Activated CD4-positive, alpha-beta memory T cell treated with anti-CD3 and anti-CD28 coated beads for 36 hours (primary cell): ENCODE measurements at regions of chr19 and their contacts with region 1.

Region 1: GRCh38 chr19:7868676-7869452 is 5.3 kb downstream of the PRR36 start:
- DNase-seq: peak; percentile 86
- H3K4me3 Mint-ChIP-seq: peak overlapping the region; percentile 73
- H3K27ac Mint-ChIP-seq: no peak overlapping the region
- H3K4me1 Mint-ChIP-seq: peaks cover 42% of the 10 kb centered on the region
- H3K27me3 Mint-ChIP-seq: peaks cover 29% of the 10 kb centered on the region

Region 2: GRCh38 chr19:7618771-7619514 is 249.9 kb before region 1 on chr19:
- CTCF ChIA-PET with region 1: no interaction called
- POLR2A ChIA-PET with region 1: no interaction called
- intact Hi-C with region 1: no loop called
- DNase-seq: no peak
- H3K4me3 Mint-ChIP-seq: no peak overlapping the region
- H3K27ac Mint-ChIP-seq: no peak overlapping the region
- H3K4me1 Mint-ChIP-seq: no peaks in the 10 kb centered on the region
- H3K27me3 Mint-ChIP-seq: no peaks in the 10 kb centered on the region

Region 3: GRCh38 chr19:7829561-7830271 is 39.1 kb before region 1 on chr19 and contains the start of gene EVI5L:
- CTCF ChIA-PET with region 1: interaction called, 12 read pairs
- POLR2A ChIA-PET with region 1: no interaction called
- intact Hi-C with region 1: loop called (anchors 2 kb)
- DNase-seq: peak; percentile 99
- H3K4me3 Mint-ChIP-seq: peak within 1 kb of the TSS; percentile 81
- H3K27ac Mint-ChIP-seq: peak within 1 kb of the TSS; percentile 55
- H3K4me1 Mint-ChIP-seq: peaks cover 17% of the 10 kb centered on the region
- H3K27me3 Mint-ChIP-seq: peaks cover 3% of the 10 kb centered on the region
- total RNA-seq, gene EVI5L: 5.0 to 5.6 TPM

Region 4: DNA sequence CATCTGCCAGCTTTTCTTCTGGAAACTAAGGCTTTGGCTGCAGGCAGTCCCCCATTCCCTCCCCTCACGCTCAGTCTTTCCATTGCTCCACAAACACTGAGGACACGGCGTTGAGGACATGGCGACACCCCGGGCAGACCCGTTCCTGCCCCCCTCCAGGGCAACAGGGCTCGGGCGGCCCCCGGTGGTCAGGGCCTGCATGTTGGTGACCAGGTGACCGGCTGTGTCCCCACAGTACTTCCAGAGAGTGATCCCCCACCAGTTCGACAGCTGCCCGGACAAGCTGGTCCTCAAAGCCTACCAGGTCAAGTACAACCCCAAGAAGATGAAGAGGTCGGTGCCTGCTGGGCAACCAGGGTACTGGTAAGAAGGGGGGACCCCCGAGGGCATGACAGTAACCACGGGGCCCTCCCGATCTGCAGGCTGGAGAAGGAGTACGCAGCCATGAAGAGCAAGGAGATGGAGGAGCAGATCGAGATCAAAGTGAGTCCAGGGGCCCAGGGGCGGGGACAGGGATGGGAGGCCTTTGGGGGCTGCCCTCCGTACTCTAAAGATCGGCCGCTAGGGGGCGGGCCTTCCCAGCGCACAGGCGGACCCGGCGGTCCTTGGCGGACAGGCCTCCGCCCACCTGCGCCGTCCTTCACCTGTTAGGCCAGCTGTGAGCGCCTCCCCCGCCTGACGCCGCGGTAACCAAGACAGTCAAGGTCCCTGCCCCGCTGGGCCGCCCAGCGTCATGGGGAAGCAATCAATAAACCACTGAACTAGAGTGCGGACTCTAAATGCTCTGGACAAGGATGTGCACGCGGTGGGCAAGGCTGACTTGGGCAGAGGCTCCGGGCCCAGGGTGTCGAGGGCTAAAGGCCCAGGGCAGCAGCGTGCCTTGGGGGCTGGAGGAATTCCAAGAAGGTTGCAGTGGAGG is 15.8 kb before region 1 on chr19:
- CTCF ChIA-PET with region 1: interaction called, 17 read pairs
- POLR2A ChIA-PET with region 1: no interaction called
- intact Hi-C with region 1: no loop called
- DNase-seq: peak; percentile 79
- H3K4me3 Mint-ChIP-seq: no peak overlapping the region
- H3K27ac Mint-ChIP-seq: no peak overlapping the region
- H3K4me1 Mint-ChIP-seq: peaks cover 4% of the 10 kb centered on the region
- H3K27me3 Mint-ChIP-seq: no peaks in the 10 kb centered on the region

Region 5: DNA sequence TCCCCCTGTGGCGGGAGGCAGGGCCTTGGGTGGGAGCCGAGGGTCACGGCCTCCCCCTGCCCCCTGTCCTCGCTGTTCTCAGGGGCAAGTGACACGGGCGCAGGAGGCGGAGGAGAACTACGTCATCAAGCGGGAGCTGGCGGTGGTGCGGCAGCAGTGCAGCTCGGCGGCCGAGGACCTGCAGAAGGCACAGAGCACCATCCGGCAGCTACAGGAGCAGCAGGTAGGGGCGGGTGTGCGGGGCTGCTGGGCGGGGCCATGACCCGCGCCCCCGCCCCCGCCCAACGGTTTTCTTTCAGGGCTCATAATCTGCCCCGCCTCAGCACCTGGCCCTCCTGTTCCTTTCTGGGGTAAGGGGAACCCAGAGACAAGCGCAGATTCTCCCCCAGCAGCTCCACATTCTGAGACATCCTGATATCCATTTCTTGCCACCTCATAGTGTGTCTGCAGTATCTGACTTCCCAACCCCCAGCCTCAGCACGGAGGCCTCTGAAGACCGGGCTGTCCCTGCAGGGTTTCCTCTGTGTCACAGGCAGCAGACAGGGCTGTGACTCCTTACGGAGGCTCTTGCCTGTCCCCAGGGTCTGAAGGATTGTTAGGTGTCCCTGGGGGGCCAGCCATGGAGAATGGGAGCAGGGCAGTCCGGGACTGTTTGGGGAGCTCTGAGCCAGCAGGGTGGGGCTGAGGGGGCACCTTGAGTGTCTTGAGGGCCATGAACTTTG is 10.6 kb before region 1 on chr19:
- CTCF ChIA-PET with region 1: interaction called, 17 read pairs
- POLR2A ChIA-PET with region 1: no interaction called
- intact Hi-C with region 1: no loop called
- DNase-seq: peak; percentile 30
- H3K4me3 Mint-ChIP-seq: no peak overlapping the region
- H3K27ac Mint-ChIP-seq: no peak overlapping the region
- H3K4me1 Mint-ChIP-seq: peaks cover 11% of the 10 kb centered on the region
- H3K27me3 Mint-ChIP-seq: peaks cover 5% of the 10 kb centered on the region

Region 6: DNA sequence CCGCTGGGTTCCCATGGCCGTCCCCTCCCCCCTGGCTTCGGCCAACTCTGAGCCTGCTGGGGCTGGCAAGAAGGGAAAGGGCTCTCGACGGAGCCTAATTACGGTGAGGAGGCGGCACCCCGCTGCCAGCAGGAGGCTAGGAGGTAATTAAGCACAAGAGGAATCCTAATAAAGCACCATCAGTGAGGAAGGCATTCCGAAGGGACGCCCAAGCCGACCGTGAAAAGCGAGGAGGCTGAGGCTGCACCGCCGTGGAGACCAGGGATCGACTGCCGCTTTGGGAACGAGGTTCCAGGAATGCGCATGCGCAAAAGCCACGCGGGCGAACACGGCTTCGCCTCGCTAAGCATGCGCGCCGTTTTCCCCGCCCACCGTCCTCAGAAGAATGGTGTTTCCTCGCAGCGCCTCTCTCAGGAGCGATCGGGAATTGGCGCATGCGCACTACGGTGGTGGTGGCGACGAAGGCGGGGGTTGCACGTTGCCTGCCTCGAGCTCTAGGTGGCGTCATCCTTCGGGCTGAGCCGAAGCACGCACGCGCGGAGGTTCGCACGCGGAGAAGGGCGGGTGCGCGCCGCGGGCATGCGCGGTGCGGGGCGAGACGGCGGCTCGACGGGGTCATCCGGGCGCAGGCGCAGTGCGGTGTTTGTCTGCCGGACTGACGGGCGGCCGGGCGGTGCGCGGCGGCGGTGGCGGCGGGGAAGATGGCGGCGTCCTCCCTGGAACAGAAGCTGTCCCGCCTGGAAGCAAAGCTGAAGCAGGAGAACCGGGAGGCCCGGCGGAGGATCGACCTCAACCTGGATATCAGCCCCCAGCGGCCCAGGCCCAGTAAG is 34.6 kb after region 1 on chr19 and contains the start of gene MAP2K7:
- CTCF ChIA-PET with region 1: interaction called, 27 read pairs
- POLR2A ChIA-PET with region 1: interaction called, 4 read pairs
- intact Hi-C with region 1: loop called (anchors 5 kb)
- DNase-seq: peak; percentile 100
- H3K4me3 Mint-ChIP-seq: peak within 1 kb of the TSS; percentile 86
- H3K27ac Mint-ChIP-seq: peak within 1 kb of the TSS; percentile 93
- H3K4me1 Mint-ChIP-seq: peaks cover 21% of the 10 kb centered on the region
- H3K27me3 Mint-ChIP-seq: peaks cover 3% of the 10 kb centered on the region
- total RNA-seq, gene MAP2K7: 29.1 to 30.1 TPM

Region 7: DNA sequence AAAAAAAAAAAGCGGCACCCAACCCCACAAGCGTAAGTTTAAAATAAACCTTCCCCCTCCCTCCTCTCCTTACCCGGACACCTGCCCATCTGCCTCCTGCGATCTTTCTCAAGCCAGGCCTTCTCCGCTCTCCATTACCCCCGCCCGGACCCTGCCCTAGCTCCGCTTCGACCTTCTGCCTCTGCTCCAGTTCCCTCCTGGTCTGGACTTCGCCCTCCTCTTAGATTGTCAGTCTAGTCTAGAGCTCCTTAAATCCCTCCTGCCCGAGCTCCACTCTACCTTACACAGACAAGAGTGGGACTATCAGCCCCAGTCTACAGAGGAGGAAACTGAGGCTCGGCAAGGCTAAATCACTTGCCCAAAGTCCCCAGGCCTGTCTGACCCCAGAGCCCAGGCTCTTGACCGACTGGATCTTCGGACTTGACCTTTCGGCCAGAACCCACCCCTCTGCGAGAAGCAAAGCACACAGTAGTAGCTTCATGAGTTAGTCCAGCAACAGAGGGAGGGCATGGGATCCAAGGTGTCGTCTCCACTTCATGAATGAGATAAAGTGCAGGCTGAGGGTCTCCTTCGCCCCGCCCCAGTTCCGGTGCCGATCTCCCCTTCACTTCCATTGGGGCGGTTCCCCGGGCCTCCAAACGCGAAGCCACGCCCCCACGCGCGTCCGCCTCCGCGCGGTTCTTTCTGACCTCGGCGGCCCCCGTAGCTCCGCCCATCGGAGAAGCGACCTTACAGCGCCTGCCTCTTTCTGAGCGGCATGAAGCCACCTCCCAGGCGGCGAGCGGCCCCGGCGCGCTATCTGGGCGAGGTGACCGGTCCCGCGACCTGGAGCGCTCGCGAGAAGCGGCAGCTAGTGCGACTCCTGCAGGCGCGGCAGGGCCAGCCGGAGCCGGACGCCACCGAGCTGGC is 51.0 kb after region 1 on chr19 and contains the start of gene SNAPC2:
- CTCF ChIA-PET with region 1: interaction called, 28 read pairs
- POLR2A ChIA-PET with region 1: interaction called, 3 read pairs
- intact Hi-C with region 1: loop called (anchors 1 kb)
- DNase-seq: peak; percentile 98
- H3K4me3 Mint-ChIP-seq: peak within 1 kb of the TSS; percentile 83
- H3K27ac Mint-ChIP-seq: peak within 1 kb of the TSS; percentile 84
- H3K4me1 Mint-ChIP-seq: peaks cover 33% of the 10 kb centered on the region
- H3K27me3 Mint-ChIP-seq: peaks cover 22% of the 10 kb centered on the region
- total RNA-seq, gene SNAPC2: 18.7 to 20.2 TPM

Region 8: DNA sequence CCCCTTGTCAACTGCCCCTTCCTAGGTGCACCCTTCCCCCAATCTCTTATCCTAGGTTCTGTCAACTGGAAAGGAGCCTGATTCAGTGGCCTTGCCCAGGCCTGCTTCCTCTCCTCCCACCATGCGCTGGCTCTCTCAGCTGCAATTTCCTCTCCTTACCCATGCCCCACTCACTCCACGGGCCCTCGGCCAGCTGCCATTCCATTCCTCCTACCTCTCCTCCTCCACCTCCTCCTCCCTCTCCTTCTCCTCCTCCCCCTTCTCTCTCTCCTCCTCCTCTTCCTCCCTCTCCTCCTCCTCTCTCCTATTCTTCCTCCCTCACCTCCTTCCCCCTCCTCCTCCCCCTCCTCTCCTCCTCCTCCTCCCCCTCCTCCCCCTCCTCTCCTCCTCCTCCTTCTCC is 84.2 kb after region 1 on chr19:
- CTCF ChIA-PET with region 1: no interaction called
- POLR2A ChIA-PET with region 1: no interaction called
- intact Hi-C with region 1: no loop called
- DNase-seq: no peak
- H3K4me3 Mint-ChIP-seq: no peak overlapping the region
- H3K27ac Mint-ChIP-seq: no peak overlapping the region
- H3K4me1 Mint-ChIP-seq: no peaks in the 10 kb centered on the region
- H3K27me3 Mint-ChIP-seq: no peaks in the 10 kb centered on the region

Region 9: GRCh38 chr19:7994114-7994513 is 125.2 kb after region 1 on chr19:
- CTCF ChIA-PET with region 1: no interaction called
- POLR2A ChIA-PET with region 1: no interaction called
- intact Hi-C with region 1: no loop called
- DNase-seq: no peak
- H3K4me3 Mint-ChIP-seq: no peak overlapping the region
- H3K27ac Mint-ChIP-seq: no peak overlapping the region
- H3K4me1 Mint-ChIP-seq: peaks cover 45% of the 10 kb centered on the region
- H3K27me3 Mint-ChIP-seq: no peaks in the 10 kb centered on the region